ENCODE measurements at regions of chr7 and their contacts with region 1.

Region 1: DNA sequence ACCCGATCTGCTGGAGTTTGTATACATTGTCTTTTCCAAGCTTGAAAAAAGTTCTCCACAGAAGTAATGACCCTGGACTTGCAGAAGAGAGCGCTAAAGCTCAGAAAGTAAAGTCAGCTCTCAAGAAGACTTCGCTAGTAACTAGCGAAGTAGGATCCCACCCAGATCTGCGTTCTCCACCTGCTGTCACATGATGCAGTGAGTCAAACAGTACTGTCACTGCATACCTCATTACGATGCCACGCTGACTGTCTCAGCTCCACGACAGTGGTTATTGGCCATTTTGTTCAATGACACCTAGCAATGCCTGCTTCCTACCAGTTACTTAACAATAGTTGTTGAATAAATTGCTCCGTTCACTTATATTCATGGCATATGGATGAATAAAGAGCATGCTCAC is 29.7 kb upstream of the SEC61G start:
- DNase-seq: peak; percentile 94
- ATAC-seq: peak; percentile 93
- H3K4me3 ChIP-seq: peak overlapping the region in 1 of 2 experiments; percentile 44; a peak in 2 of 4 replicates
- H3K27ac ChIP-seq: 0 out of 2 replicates have a peak overlapping the region, but pooled peaks have one; percentile 14
- H3K4me1 ChIP-seq: peaks cover 5% of the 10 kb centered on the region; the same call in 1 of the 2 replicates
- H3K27me3 ChIP-seq: no peaks in the 10 kb centered on the region
- CTCF ChIP-seq: peak; percentile 87

Region 2: GRCh38 chr7:54839538-54840213 is 51.0 kb after region 1 on chr7:
- CTCF ChIA-PET with region 1: interaction called, 7 read pairs
- POLR2A ChIA-PET with region 1: no interaction called
- in situ Hi-C with region 1: no loop called
- intact Hi-C with region 1: loop called (anchors 1 kb)
- DNase-seq: no peak
- ATAC-seq: peak; percentile 98
- H3K4me3 ChIP-seq: no peak overlapping the region
- H3K27ac ChIP-seq: no peak overlapping the region
- H3K4me1 ChIP-seq: no peaks in the 10 kb centered on the region
- H3K27me3 ChIP-seq: no peaks in the 10 kb centered on the region
- CTCF ChIP-seq: peak; percentile 94

Region 3: GRCh38 chr7:54932818-54933543 is 144.3 kb after region 1 on chr7:
- CTCF ChIA-PET with region 1: no interaction called
- POLR2A ChIA-PET with region 1: no interaction called
- in situ Hi-C with region 1: no loop called
- intact Hi-C with region 1: loop called (anchors 5 kb)
- DNase-seq: no peak
- ATAC-seq: peak; percentile 100
- H3K4me3 ChIP-seq: peak overlapping the region; percentile 41 to 46
- H3K27ac ChIP-seq: peak overlapping the region; percentile 69
- H3K4me1 ChIP-seq: peaks cover 4% of the 10 kb centered on the region
- H3K27me3 ChIP-seq: no peaks in the 10 kb centered on the region
- CTCF ChIP-seq: no peak

Region 4: DNA sequence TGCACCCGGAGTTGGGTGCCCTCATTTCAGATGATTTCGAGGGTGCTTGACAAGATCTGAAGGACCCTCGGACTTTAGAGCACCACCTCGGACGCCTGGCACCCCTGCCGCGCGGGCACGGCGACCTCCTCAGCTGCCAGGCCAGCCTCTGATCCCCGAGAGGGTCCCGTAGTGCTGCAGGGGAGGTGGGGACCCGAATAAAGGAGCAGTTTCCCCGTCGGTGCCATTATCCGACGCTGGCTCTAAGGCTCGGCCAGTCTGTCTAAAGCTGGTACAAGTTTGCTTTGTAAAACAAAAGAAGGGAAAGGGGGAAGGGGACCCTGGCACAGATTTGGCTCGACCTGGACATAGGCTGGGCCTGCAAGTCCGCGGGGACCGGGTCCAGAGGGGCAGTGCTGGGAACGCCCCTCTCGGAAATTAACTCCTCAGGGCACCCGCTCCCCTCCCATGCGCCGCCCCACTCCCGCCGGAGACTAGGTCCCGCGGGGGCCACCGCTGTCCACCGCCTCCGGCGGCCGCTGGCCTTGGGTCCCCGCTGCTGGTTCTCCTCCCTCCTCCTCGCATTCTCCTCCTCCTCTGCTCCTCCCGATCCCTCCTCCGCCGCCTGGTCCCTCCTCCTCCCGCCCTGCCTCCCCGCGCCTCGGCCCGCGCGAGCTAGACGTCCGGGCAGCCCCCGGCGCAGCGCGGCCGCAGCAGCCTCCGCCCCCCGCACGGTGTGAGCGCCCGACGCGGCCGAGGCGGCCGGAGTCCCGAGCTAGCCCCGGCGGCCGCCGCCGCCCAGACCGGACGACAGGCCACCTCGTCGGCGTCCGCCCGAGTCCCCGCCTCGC is 229.9 kb after region 1 on chr7 and contains the start of gene EGFR:
- CTCF ChIA-PET with region 1: no interaction called
- POLR2A ChIA-PET with region 1: no interaction called
- in situ Hi-C with region 1: no loop called
- intact Hi-C with region 1: loop called (anchors 5 kb)
- DNase-seq: no peak
- ATAC-seq: peak; percentile 94
- H3K4me3 ChIP-seq: peak within 1 kb of the TSS; percentile 74 to 85
- H3K27ac ChIP-seq: peak within 1 kb of the TSS; percentile 91
- H3K4me1 ChIP-seq: peaks cover 31% of the 10 kb centered on the region
- H3K27me3 ChIP-seq: no peaks in the 10 kb centered on the region
- CTCF ChIP-seq: no peak
- total RNA-seq, gene EGFR: 156 TPM

Region 5: DNA sequence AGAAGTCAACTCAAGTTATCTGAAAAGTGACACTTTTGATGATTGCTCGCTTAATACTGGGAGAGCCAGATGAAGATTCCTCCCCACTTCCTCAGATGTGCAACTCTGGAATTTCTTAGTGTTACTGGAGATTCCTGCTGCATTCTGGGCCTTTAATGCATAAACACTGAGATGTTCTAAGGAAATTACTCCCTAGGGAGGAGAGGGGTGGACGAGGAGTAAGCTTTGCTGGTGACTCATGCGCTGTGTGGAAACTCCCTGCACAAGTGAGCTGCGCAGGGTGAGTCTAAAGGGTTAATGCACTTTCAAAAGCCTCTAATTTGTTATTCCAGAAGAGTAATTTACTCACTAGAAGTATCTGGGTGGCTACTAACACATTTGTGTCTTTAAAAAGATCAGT is 276.4 kb after region 1 on chr7:
- CTCF ChIA-PET with region 1: no interaction called
- POLR2A ChIA-PET with region 1: no interaction called
- in situ Hi-C with region 1: no loop called
- intact Hi-C with region 1: loop called (anchors 2 kb)
- DNase-seq: peak; percentile 89
- ATAC-seq: peak; percentile 88
- H3K4me3 ChIP-seq: peak overlapping the region in 1 of 2 experiments; percentile 48; a peak in 3 of 4 replicates
- H3K27ac ChIP-seq: peak overlapping the region; percentile 100
- H3K4me1 ChIP-seq: peaks cover 96% of the 10 kb centered on the region
- H3K27me3 ChIP-seq: no peaks in the 10 kb centered on the region
- CTCF ChIP-seq: no peak